Vagina (tissue), 2 donors: ENCODE measurements at regions of chr3 and their contacts with region 1.

Region 1: GRCh38 chr3:49673715-49674496 is at the start of gene APEH:
- DNase-seq: peak in 1 of 2 donors; percentile 95
- H3K4me3 ChIP-seq: peak within 1 kb of the TSS; percentile 74 to 98
- H3K27ac ChIP-seq: peak within 1 kb of the TSS; percentile 78
- H3K4me1 ChIP-seq: peaks cover 24% of the 10 kb centered on the region
- H3K27me3 ChIP-seq: no peaks in the 10 kb centered on the region
- CTCF ChIP-seq: no peak
- POLR2A ChIP-seq: peak in 1 of 2 donors; percentile 19
- total RNA-seq, gene APEH: 53.3 TPM

Region 2: DNA sequence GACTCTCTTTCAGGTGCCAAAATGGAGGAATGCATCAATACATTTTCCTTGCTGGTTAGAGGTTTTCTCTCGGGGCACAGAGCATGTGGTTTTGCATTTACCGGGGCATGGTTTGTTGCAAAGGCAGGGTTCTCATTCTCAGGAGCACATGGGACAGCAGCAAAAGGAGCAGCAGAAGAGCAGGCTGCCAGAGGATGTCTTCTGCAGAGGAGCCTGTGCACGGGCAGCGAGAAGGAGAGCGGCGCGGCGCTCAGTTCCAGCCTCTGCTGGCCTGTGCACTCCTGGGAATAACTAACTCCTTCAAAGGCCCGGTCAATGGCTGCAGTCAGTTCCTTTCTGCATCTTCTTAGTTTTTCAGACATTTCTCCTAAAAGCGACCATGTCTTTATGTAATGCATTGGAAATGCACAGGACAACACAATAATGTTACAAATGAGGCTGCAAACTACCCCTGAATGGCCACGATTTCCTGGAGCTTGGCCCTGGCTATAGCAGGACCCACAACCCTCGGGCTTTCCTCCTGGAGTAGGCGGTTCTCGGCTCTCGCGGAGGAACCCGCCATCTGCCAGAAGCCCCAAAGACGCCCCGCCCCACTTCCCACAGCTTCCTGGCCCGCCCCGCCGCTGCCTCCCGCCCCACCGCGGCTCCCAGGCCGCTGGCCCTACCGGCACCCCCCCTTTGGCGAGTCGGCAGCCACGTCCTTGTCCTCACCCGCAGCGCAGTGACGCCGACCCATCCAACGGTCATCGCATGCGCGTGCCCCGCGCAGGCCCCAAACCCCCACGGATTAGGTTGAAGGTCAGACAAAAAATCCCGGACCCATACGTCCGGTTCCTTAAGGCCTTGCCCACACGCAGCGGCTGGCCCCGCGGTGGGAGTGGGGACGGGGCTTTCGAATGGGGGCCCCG is 397.2 kb before region 1 on chr3 and contains the start of gene C3orf62:
- intact Hi-C with region 1: loop called (anchors 5 kb)
- DNase-seq: peak in 1 of 2 donors; percentile 89
- H3K4me3 ChIP-seq: peak within 1 kb of the TSS; percentile 33 to 54
- H3K27ac ChIP-seq: peak within 1 kb of the TSS; percentile 94
- H3K4me1 ChIP-seq: peaks cover 38% of the 10 kb centered on the region
- H3K27me3 ChIP-seq: no peaks in the 10 kb centered on the region
- CTCF ChIP-seq: peak in 1 of 3 experiments; percentile 13
- POLR2A ChIP-seq: peak in 1 of 2 donors; percentile 22
- total RNA-seq, gene C3orf62: 17.9 TPM

Region 3: DNA sequence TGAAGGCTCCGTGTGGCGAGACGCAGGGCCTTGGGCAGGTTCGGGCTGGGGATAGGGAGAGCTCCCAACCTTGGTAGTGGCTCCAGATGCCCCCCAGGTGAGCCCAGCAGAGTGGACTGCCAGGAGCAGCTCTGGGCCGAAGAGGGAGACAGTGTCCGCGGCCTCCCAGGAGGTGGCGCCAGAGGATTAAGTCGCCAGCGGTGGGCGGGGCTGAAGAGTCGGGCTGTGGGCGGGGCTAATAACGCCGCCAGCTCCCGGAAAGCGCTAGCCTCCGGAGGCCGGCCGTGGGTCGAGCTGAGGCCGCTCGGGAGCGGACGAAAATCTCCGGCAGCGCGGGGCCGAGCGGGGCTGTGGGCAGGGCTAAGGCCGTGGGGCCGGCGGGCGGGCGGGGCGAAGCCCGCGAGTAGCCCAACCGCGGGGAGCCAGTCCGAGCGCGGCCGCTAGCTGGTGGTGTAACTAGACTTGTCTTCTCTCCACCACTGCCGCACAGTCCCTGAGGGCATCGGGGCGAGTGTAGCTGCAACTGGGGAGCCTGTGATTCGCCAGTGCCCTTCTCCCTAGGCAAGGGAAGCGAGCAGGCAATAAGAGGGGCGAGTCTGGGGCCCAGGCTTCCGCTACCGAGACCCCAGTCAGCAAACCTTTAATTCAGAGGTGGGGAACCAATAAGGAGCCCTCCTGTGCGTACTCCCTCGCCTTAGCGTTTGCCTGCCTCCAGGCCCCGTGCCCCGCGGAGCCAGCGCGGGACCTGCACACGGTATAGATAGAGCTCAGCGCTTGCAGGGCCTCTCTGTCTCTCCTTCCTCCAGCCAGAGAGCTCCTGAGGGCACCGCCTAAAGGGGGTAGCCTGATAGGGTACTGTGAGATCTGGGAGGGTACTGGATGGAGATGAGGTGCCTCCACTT is 134.0 kb before region 1 on chr3:
- intact Hi-C with region 1: loop called (anchors 5 kb)
- DNase-seq: peak in 1 of 2 donors; percentile 92
- H3K4me3 ChIP-seq: peak overlapping the region; percentile 49 to 59
- H3K27ac ChIP-seq: peak overlapping the region; percentile 77
- H3K4me1 ChIP-seq: peaks cover 15% of the 10 kb centered on the region
- H3K27me3 ChIP-seq: no peaks in the 10 kb centered on the region
- CTCF ChIP-seq: peak; percentile 88 to 98 (median 92)
- POLR2A ChIP-seq: no peak

Region 4: GRCh38 chr3:49939858-49940666 is 266.2 kb after region 1 on chr3 and contains the start of gene RBM6:
- intact Hi-C with region 1: no loop called
- DNase-seq: peak; percentile 97 to 98
- H3K4me3 ChIP-seq: peak within 1 kb of the TSS; percentile 60 to 79
- H3K27ac ChIP-seq: peak within 1 kb of the TSS; percentile 84
- H3K4me1 ChIP-seq: peaks cover 27% of the 10 kb centered on the region
- H3K27me3 ChIP-seq: no peaks in the 10 kb centered on the region
- CTCF ChIP-seq: no peak
- POLR2A ChIP-seq: peak in 1 of 2 donors; percentile 65
- total RNA-seq, gene RBM6: 71.5 TPM